ENCODE measurements at regions of chr1 and their contacts with region 1.

Region 1: DNA sequence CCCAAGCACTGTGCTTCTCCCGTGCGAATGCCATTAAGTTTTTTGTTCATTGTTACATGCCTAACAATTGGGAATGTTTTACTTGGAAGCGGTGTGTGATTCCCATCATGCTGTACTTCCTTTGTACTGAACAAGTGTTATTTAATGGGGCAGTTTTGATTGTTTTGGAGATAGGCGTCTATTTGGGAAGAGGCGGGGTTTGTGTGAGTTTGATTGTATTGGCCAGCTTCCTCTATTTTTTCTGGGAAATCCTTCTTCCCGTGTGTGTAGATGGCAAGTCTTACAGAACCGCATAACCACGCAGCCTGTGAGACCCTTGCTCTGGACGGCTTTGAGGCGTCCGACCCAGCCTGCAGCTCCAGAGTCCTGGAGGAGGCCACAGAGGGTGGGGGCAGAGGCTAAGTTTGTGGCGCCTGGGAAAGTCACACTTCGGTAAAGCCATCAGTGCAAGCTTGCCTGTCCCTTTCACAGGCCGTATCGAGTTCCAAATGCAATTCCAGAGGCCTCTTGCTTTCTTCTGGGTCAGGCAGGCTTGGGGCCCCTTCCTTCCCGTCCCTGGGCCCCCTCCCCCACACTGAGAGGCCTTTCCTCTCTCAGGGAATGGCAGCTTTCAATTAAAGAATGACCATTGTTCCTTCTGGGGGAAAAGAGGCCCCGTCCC is 210.3 kb downstream of the TOMM20 start:
- DNase-seq: peak; percentile 74 to 80
- ATAC-seq: peak; percentile 74
- H3K4me3 ChIP-seq: no peak overlapping the region
- H3K27ac ChIP-seq: peak overlapping the region; percentile 51 to 97
- H3K4me1 ChIP-seq: peaks cover 2 to 3% of the 10 kb centered on the region in 2 donors
- H3K27me3 ChIP-seq: no peaks in the 10 kb centered on the region

Region 2: GRCh38 chr1:234610348-234611152 is 307.8 kb before region 1 on chr1:
- intact Hi-C with region 1: loop called (anchors 5 kb)
- DNase-seq: peak; percentile 98
- ATAC-seq: peak; percentile 87
- H3K4me3 ChIP-seq: peak overlapping the region; percentile 89 to 92
- H3K27ac ChIP-seq: peak overlapping the region; percentile 96 to 97
- H3K4me1 ChIP-seq: peaks cover 5% of the 10 kb centered on the region in 2 donors
- H3K27me3 ChIP-seq: no peaks in the 10 kb centered on the region

Region 3: GRCh38 chr1:234836045-234836681 is 82.1 kb before region 1 on chr1:
- intact Hi-C with region 1: no loop called
- DNase-seq: no peak
- ATAC-seq: no peak
- H3K4me3 ChIP-seq: no peak overlapping the region
- H3K27ac ChIP-seq: no peak overlapping the region
- H3K4me1 ChIP-seq: no peaks in the 10 kb centered on the region
- H3K27me3 ChIP-seq: no peaks in the 10 kb centered on the region

Region 4: GRCh38 chr1:234862944-234863515 is 55.3 kb before region 1 on chr1:
- intact Hi-C with region 1: loop called in 1 of 2 experiments (anchors 5 kb)
- DNase-seq: peak; percentile 89 to 90
- ATAC-seq: peak; percentile 79
- H3K4me3 ChIP-seq: no peak overlapping the region
- H3K27ac ChIP-seq: peak overlapping the region; percentile 37 to 90
- H3K4me1 ChIP-seq: no peaks in the 10 kb centered on the region
- H3K27me3 ChIP-seq: no peaks in the 10 kb centered on the region

Region 5: DNA sequence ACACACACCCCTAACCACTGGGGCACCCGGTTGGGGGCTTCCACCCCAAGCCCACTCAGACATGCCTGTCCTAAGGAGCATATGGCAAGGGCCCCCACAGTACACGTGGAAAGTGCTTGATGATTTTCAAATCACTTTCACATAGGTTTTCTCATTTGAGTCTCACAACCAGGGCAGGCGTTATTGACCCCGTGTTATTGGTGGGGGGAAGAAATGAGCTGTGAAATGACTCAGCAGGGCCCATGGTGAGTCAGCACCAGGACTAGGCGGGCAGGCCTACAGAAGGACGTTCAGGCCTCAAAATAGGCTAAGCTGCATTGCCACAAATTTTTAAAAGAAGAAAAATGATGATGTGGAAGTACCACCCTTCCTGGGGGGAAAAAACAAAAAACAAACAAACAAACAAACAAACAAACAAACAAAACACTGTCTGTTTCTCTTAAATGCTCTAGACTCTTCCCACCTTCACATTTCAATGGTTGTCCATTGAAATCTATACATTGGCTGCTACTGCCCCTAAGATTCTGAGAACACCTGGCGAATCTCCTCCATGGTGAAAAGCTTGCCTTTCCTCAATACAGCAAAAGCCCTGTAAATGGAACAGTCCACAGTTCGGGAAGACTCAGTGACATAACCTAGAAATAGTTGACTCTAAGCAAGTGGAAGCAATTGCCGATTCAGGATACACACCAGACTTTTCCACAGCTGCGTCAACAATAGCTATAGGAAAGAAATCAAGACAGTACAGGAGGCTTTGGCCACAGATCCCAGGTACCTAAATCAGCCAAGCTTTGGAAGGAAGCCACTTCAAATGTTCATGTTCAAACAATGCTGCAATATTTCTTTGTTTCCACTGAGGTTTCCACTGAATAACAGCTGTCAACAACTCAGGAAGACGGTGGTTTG is 24.3 kb before region 1 on chr1:
- intact Hi-C with region 1: no loop called
- DNase-seq: peak in 1 of 2 donors; percentile 51
- ATAC-seq: peak; percentile 26
- H3K4me3 ChIP-seq: no peak overlapping the region
- H3K27ac ChIP-seq: no peak overlapping the region
- H3K4me1 ChIP-seq: no peaks in the 10 kb centered on the region
- H3K27me3 ChIP-seq: no peaks in the 10 kb centered on the region

Region 6: GRCh38 chr1:234970731-234971476 is 52.6 kb after region 1 on chr1:
- intact Hi-C with region 1: loop called in 1 of 2 experiments (anchors 5 kb)
- DNase-seq: peak; percentile 86 to 91
- ATAC-seq: peak; percentile 87
- H3K4me3 ChIP-seq: no peak overlapping the region
- H3K27ac ChIP-seq: peak overlapping the region; percentile 90 to 98
- H3K4me1 ChIP-seq: peaks cover 0 to 7% of the 10 kb centered on the region in 2 donors
- H3K27me3 ChIP-seq: no peaks in the 10 kb centered on the region

Region 7: GRCh38 chr1:234980645-234981396 is 62.5 kb after region 1 on chr1:
- intact Hi-C with region 1: loop called (anchors 2 to 5 kb)
- DNase-seq: peak; percentile 95
- ATAC-seq: peak; percentile 90
- H3K4me3 ChIP-seq: no peak overlapping the region
- H3K27ac ChIP-seq: peak overlapping the region; percentile 97 to 98
- H3K4me1 ChIP-seq: peaks cover 7 to 10% of the 10 kb centered on the region in 2 donors
- H3K27me3 ChIP-seq: no peaks in the 10 kb centered on the region